ENCODE measurements at regions of chr10 and their contacts with region 1.

Region 1: GRCh38 chr10:69087590-69088470 is at the start of gene SRGN:
- DNase-seq: peak; percentile 90
- ATAC-seq: peak; percentile 67
- H3K4me3 Mint-ChIP-seq: peak within 1 kb of the TSS; percentile 98
- H3K27ac Mint-ChIP-seq: peak within 1 kb of the TSS; percentile 99
- H3K4me1 Mint-ChIP-seq: peaks cover 48% of the 10 kb centered on the region
- H3K27me3 Mint-ChIP-seq: peaks cover 1% of the 10 kb centered on the region
- CTCF ChIP-seq: no peak
- total RNA-seq, gene SRGN: 279 to 292 TPM

Region 2: GRCh38 chr10:68276224-68276623 is 811.6 kb before region 1 on chr10:
- CTCF ChIA-PET with region 1: no interaction called
- POLR2A ChIA-PET with region 1: no interaction called
- intact Hi-C with region 1: no loop called
- DNase-seq: no peak
- ATAC-seq: no peak
- H3K4me3 Mint-ChIP-seq: no peak overlapping the region
- H3K27ac Mint-ChIP-seq: no peak overlapping the region
- H3K4me1 Mint-ChIP-seq: no peaks in the 10 kb centered on the region
- H3K27me3 Mint-ChIP-seq: peaks cover 2% of the 10 kb centered on the region
- CTCF ChIP-seq: no peak

Region 3: DNA sequence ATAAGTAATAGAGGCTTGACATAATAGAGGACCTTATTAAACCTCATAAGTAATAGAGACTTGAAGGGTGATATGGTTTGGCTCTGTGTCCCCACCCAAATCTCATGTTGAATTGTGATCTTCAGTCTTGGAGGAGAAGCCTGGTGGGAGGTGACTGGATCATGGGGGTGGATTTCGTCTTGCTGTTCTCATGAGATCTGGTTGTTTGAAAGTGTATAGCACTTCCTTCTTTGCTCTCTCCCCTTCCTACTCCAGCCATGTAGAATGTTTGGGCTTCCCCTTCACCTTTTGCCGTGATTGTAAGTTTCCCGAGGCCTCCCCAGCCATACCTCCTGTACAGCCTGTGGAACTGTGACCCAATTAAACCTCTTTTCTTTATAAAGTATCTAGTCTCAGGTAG is 90.6 kb before region 1 on chr10:
- CTCF ChIA-PET with region 1: interaction called, 14 read pairs
- POLR2A ChIA-PET with region 1: interaction called, 4 read pairs
- intact Hi-C with region 1: loop called (anchors 2 kb)
- DNase-seq: peak; percentile 20
- ATAC-seq: peak; percentile 17
- H3K4me3 Mint-ChIP-seq: peak overlapping the region; percentile 8
- H3K27ac Mint-ChIP-seq: peak overlapping the region; percentile 93
- H3K4me1 Mint-ChIP-seq: peaks cover 47% of the 10 kb centered on the region
- H3K27me3 Mint-ChIP-seq: no peaks in the 10 kb centered on the region
- CTCF ChIP-seq: no peak

Region 4: DNA sequence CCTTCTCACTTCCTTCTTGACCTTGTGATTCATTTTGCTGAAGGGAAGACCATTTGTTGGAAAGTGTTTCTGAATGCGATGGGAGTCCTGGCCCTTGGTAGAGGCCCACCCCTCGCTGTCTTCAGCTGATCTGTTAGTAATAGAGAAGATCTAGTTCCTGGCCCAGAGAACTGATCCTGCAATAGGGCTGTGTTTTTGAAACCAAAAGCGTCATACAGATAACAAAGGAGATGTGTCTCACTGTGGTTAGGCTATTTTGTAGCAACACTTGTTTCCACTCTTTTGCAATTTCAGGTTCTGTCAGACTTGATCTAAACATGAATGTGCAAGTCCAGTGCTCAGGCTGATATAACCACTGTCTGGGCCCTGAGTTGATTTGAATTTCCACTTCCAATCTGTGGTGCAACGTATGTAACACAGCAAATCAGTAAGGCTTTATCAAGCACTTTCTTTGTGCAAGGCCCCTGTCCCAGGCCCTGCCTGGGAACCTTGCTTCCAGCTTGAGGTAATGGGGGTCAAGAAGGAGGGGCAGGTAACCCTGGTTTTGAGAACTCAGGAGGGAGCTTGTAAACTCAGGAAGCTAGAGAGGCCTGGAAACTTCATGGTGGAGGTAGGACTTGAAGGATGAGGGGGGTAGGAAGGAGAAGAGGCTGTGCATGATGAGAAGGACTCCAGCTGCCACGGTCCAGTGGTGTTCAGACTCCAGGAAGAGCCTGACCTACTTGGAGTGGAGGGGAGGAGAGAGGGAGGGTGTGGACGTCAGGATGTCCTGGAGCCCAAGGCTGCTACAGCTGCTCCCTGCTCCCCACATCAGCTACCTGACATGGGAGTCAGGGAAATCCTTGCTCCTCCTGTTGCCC is 42.2 kb before region 1 on chr10:
- CTCF ChIA-PET with region 1: interaction called, 13 read pairs
- POLR2A ChIA-PET with region 1: interaction called, 77 read pairs
- intact Hi-C with region 1: loop called (anchors 2 kb)
- DNase-seq: peak; percentile 56
- ATAC-seq: peak; percentile 75
- H3K4me3 Mint-ChIP-seq: peak overlapping the region; percentile 42
- H3K27ac Mint-ChIP-seq: peak overlapping the region; percentile 94
- H3K4me1 Mint-ChIP-seq: peaks cover 40% of the 10 kb centered on the region
- H3K27me3 Mint-ChIP-seq: no peaks in the 10 kb centered on the region
- CTCF ChIP-seq: no peak

Region 5: GRCh38 chr10:69061305-69062161 is 26.3 kb before region 1 on chr10:
- CTCF ChIA-PET with region 1: interaction called, 18 read pairs
- POLR2A ChIA-PET with region 1: interaction called, 52 read pairs
- intact Hi-C with region 1: no loop called
- DNase-seq: peak; percentile 35
- ATAC-seq: peak; percentile 35
- H3K4me3 Mint-ChIP-seq: peak overlapping the region; percentile 53
- H3K27ac Mint-ChIP-seq: peak overlapping the region; percentile 81
- H3K4me1 Mint-ChIP-seq: peaks cover 51% of the 10 kb centered on the region
- H3K27me3 Mint-ChIP-seq: no peaks in the 10 kb centered on the region
- CTCF ChIP-seq: no peak

Region 6: GRCh38 chr10:69123747-69124562 is 36.1 kb after region 1 on chr10 and contains the start of gene VPS26A:
- CTCF ChIA-PET with region 1: interaction called, 10 read pairs
- POLR2A ChIA-PET with region 1: interaction called, 3 read pairs
- intact Hi-C with region 1: loop called (anchors 5 kb)
- DNase-seq: peak; percentile 99
- ATAC-seq: peak; percentile 98
- H3K4me3 Mint-ChIP-seq: peak within 1 kb of the TSS; percentile 86
- H3K27ac Mint-ChIP-seq: peak within 1 kb of the TSS; percentile 90
- H3K4me1 Mint-ChIP-seq: peaks cover 23% of the 10 kb centered on the region
- H3K27me3 Mint-ChIP-seq: no peaks in the 10 kb centered on the region
- CTCF ChIP-seq: peak; percentile 5
- total RNA-seq, gene VPS26A: 33.1 to 34.5 TPM

Measured in activated CD8-positive, alpha-beta T cell treated with anti-CD3 and anti-CD28 coated beads for 36 hours (primary cell).